Activated T-helper 2 cell treated with anti-CD3 and anti-CD28 coated beads, Interferon-gamma antibody, Interleukin-2, Interleukin-4, amounts not matched to agents 10 μg/mL and 5 μg/mL and 100 μg/mL, durations not matched to agents 14 hours and 24 hours and 36 hours (primary cell): ENCODE measurements at regions of chr4 and their contacts with region 1.

Region 1: GRCh38 chr4:2262143-2262943 is 434 bp upstream of the MXD4 start:
- DNase-seq: peak; percentile 98
- H3K4me3 Mint-ChIP-seq: peak overlapping the region; percentile 69
- H3K27ac Mint-ChIP-seq: peak overlapping the region; percentile 81
- H3K4me1 Mint-ChIP-seq: no peaks in the 10 kb centered on the region
- H3K27me3 Mint-ChIP-seq: no peaks in the 10 kb centered on the region

Region 2: GRCh38 chr4:2047001-2047660 is 215.2 kb before region 1 on chr4:
- intact Hi-C with region 1: no loop called
- DNase-seq: no peak
- H3K4me3 Mint-ChIP-seq: no peak overlapping the region
- H3K27ac Mint-ChIP-seq: no peak overlapping the region
- H3K4me1 Mint-ChIP-seq: no peaks in the 10 kb centered on the region
- H3K27me3 Mint-ChIP-seq: peaks cover 19% of the 10 kb centered on the region

Region 3: DNA sequence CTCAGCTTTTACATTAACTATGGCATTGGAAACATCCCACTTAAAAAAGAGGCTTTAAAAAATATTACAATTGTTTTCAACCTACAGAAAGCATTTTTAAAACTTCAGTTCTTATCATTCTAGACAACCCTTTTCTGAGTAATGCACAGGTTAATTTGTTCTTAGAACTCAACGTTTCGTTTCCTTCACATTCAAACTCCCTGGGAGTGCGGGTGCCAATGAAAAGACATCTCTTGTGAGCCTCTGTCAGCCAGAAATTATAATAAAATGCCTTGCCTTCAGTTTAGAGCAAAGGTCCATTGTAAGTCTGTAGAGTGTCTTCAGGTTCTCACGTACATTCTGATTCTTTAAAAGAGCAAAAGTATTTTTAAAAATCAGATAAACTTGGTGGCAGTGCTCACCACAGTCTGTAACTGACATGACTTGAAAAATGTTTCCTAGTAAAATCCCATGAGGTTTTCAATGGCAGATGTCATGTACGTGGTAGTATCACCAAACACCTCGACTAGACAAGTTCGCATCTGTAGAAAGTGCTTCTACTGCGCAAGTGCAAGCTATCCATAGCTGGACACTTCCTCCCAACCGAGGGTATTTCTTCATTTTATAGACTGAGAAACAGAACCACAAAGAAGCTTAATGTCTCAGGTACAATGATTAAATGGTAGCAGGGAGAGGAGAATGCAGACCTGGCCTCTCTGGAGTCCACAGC is 86.2 kb before region 1 on chr4:
- intact Hi-C with region 1: no loop called
- DNase-seq: no peak
- H3K4me3 Mint-ChIP-seq: no peak overlapping the region
- H3K27ac Mint-ChIP-seq: peak overlapping the region; percentile 38
- H3K4me1 Mint-ChIP-seq: peaks cover 59% of the 10 kb centered on the region
- H3K27me3 Mint-ChIP-seq: no peaks in the 10 kb centered on the region

Region 4: DNA sequence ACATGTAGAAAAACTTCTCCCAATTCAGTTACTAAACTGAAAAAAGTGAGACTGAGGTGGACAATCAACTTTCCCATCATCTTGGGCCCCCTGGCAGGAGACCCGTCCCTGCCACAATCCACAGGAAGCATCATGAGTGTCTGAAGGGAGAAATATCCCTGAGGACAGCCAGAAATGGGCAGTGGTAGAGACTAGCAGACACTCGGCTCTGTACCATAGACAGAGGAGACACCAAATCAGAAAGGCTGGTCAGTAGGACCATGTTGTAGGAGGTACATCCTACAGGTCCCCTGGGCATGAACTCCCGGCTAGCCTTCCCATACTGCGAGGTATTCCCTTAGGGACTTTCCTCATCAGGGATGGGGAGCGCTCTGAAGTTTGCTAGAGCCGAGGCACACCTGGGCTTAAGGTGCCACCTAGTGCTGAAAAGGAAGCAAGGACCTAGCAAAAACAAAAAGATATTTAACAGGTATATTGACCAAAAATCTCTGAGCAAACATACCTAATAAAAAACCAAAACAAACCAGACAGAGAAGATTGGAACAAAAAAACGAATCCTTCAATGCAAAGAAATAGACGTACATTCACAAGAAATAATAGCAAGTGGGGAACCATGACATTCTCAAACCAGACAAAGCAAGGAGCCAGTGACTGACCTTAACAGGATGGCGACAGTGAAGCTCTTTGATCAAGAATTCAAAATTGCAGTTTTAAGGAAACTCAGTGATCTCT is 76.0 kb before region 1 on chr4:
- intact Hi-C with region 1: no loop called
- DNase-seq: no peak
- H3K4me3 Mint-ChIP-seq: no peak overlapping the region
- H3K27ac Mint-ChIP-seq: no peak overlapping the region
- H3K4me1 Mint-ChIP-seq: peaks cover 9% of the 10 kb centered on the region
- H3K27me3 Mint-ChIP-seq: no peaks in the 10 kb centered on the region

Region 5: GRCh38 chr4:2241410-2242353 is 20.7 kb before region 1 on chr4 and contains the starts of genes HAUS3 and POLN:
- intact Hi-C with region 1: loop called (anchors 1 kb)
- DNase-seq: peak; percentile 100
- H3K4me3 Mint-ChIP-seq: peak within 1 kb of the TSS; percentile 91
- H3K27ac Mint-ChIP-seq: peak within 1 kb of the TSS; percentile 80
- H3K4me1 Mint-ChIP-seq: peaks cover 49% of the 10 kb centered on the region
- H3K27me3 Mint-ChIP-seq: peaks cover 3% of the 10 kb centered on the region
- total RNA-seq, gene HAUS3: 17.1 and 18.6 TPM in 2 replicates
- total RNA-seq, gene POLN: 1.3 and 1.4 TPM in 2 replicates

Region 6: GRCh38 chr4:2281575-2282343 is 19.4 kb after region 1 on chr4:
- intact Hi-C with region 1: loop called (anchors 2 kb)
- DNase-seq: peak; percentile 68
- H3K4me3 Mint-ChIP-seq: peak overlapping the region; percentile 17
- H3K27ac Mint-ChIP-seq: peak overlapping the region; percentile 90
- H3K4me1 Mint-ChIP-seq: peaks cover 24% of the 10 kb centered on the region
- H3K27me3 Mint-ChIP-seq: no peaks in the 10 kb centered on the region

Region 7: DNA sequence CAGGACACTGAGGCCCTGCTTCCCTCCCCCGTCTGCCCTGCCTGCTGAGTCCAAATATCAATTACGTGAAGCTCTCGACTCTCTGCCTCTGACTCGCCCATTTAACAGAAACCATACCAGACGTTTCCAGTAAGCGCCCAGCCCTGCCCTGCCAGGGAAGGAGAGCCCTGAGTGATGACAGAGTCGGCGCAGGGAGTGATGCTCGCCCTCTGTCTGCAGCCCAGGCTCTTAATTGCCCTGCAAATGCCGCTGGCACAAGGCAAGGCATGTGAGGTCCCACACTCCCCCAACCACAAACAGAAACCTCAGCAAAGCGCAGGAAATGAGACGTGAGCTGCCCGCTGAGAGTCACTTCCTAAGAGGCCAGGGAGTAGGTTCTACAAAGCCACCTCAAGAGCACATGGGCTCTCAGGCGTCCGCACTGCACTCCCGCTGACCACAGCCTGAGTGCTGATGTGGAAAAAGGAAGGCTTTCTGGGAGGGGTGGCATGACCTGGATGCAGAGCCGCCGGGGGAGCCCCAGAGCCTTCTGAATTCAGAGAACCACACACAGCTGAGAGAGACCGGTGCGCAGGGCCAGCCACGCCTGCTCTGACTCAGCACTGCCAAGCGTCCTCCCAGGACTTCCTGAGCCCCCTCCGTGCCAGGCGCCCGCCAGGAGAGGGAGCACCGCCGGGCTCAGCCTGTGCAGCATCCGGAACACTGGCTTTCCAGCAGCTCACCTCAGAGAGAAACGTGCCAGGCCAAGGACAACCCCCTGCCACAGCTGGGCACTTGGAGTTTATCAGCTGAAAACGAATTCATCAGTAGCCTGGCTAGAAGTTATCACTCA is 150.8 kb after region 1 on chr4:
- intact Hi-C with region 1: loop called (anchors 1 kb)
- DNase-seq: peak; percentile 91
- H3K4me3 Mint-ChIP-seq: peak overlapping the region; percentile 74
- H3K27ac Mint-ChIP-seq: peak overlapping the region; percentile 96
- H3K4me1 Mint-ChIP-seq: peaks cover 57% of the 10 kb centered on the region
- H3K27me3 Mint-ChIP-seq: peaks cover 14% of the 10 kb centered on the region

Region 8: DNA sequence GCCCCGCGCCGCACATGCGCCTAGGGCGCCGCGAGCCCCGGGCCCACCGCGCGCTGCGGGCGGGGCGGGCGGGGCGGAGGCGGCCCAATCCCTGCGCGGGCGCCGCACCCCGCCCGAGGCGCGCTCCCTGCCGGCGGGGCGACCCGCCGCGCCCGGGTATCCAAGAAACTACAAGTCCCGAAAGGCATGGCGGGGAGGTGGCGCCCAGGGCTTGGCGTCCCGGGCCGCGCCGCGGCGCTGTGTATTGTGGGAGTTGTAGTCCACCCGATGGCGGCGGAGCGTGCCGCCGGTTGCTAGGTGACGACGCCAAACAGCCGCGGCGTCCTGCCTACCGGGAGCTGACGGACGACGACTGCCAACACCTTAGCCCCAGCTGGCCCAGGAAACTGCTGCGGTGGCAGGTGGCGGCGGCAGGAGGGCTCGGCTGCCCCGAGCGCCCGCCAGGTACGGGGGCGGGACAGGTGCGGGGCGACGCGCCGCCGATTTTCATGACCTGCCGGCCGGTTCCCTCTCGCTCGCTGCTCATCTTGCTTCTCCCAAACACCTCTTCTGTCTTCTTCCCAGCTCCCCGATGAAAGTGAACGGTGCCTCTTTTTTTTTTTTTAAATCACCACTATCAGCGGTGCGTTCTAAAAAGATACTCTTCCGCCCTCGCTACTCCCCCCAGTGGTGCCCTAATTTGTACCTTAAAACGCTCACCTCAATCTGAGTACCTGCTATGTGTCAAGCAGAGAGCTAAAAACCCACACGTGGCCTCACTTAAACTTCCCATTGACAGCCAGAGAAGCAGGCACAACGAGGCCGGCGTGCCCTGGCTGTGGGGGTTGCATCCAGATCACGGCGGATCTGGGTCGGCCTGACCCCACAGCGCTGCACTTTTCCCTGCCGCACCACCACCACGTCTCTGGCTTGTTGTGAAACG is 156.6 kb after region 1 on chr4 and contains the start of gene CFAP99:
- intact Hi-C with region 1: loop called (anchors 1 kb)
- DNase-seq: peak; percentile 94
- H3K4me3 Mint-ChIP-seq: peak within 1 kb of the TSS; percentile 88
- H3K27ac Mint-ChIP-seq: peak within 1 kb of the TSS; percentile 15
- H3K4me1 Mint-ChIP-seq: peaks cover 31% of the 10 kb centered on the region
- H3K27me3 Mint-ChIP-seq: peaks cover 48% of the 10 kb centered on the region
- total RNA-seq, gene CFAP99: not detected in 2 replicates

Region 9: GRCh38 chr4:2536193-2537010 is 274.1 kb after region 1 on chr4 and contains the start of gene FAM193A:
- intact Hi-C with region 1: loop called (anchors 1 kb)
- DNase-seq: peak; percentile 99
- H3K4me3 Mint-ChIP-seq: peak within 1 kb of the TSS; percentile 90
- H3K27ac Mint-ChIP-seq: peak within 1 kb of the TSS; percentile 93
- H3K4me1 Mint-ChIP-seq: peaks cover 10% of the 10 kb centered on the region
- H3K27me3 Mint-ChIP-seq: no peaks in the 10 kb centered on the region
- total RNA-seq, gene FAM193A: 30.8 and 31.2 TPM in 2 replicates

Region 10: GRCh38 chr4:2731907-2732317 is 469.6 kb after region 1 on chr4:
- intact Hi-C with region 1: no loop called
- DNase-seq: no peak
- H3K4me3 Mint-ChIP-seq: no peak overlapping the region
- H3K27ac Mint-ChIP-seq: no peak overlapping the region
- H3K4me1 Mint-ChIP-seq: no peaks in the 10 kb centered on the region
- H3K27me3 Mint-ChIP-seq: no peaks in the 10 kb centered on the region

Region 11: DNA sequence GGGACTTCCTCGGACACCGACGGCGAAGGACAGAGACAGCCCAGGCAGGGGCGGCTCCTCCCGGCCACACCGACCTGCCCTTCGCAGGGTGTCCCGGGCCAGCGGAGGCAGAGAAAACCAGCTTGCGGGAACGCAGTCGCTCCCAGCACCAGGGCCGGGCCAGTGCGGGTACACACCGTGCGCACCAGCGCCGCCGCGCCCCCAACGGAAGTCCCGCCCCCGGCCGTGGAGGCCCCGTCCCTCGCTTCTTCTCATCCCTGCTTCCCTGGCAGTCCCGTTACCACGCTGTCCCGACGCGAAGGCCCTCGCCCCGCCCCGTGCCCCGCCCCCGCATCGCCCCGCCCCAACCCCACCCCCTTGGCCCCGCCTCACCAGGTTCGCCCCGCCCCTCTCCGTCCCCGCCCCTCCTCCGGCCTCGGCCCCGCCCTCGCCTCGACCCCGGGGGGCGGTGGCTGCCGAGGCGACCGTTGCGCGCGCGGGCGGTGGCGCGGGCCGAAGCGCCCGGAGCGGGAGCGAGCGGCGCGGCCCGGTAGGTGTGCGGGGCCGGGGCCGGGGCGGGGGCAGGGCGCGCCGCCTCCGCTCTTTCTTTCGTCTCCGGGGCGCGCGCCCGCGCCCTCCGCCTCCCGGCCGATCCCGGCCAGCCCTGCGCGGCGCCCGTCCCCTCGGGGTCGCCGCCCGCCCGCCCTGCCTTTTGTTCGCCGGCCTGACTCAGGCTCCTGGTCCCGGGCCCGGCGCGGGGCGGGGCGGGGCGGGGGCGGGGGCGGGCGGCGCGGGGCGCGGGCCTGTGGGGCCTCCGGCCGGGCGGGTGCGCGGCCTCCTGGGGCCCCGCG is 1030.4 kb after region 1 on chr4 and contains the start of gene RGS12:
- intact Hi-C with region 1: loop called (anchors 5 kb)
- DNase-seq: peak; percentile 82
- H3K4me3 Mint-ChIP-seq: peak within 1 kb of the TSS; percentile 88
- H3K27ac Mint-ChIP-seq: peak within 1 kb of the TSS; percentile 46
- H3K4me1 Mint-ChIP-seq: peaks cover 10% of the 10 kb centered on the region
- H3K27me3 Mint-ChIP-seq: peaks cover 38% of the 10 kb centered on the region
- total RNA-seq, gene RGS12: 7.0 and 8.3 TPM in 2 replicates